Ascending aorta (tissue), 2 donors: ENCODE measurements at regions of chr6 and their contacts with region 1.

Region 1: GRCh38 chr6:63352587-63353285 is 33.0 kb upstream of the LGSN start:
- DNase-seq: no peak
- H3K4me3 ChIP-seq: no peak overlapping the region
- H3K27ac ChIP-seq: no peak overlapping the region
- H3K4me1 ChIP-seq: no peaks in the 10 kb centered on the region
- H3K27me3 ChIP-seq: no peaks in the 10 kb centered on the region
- CTCF ChIP-seq: peak in 1 of 3 experiments; percentile 28

Region 2: DNA sequence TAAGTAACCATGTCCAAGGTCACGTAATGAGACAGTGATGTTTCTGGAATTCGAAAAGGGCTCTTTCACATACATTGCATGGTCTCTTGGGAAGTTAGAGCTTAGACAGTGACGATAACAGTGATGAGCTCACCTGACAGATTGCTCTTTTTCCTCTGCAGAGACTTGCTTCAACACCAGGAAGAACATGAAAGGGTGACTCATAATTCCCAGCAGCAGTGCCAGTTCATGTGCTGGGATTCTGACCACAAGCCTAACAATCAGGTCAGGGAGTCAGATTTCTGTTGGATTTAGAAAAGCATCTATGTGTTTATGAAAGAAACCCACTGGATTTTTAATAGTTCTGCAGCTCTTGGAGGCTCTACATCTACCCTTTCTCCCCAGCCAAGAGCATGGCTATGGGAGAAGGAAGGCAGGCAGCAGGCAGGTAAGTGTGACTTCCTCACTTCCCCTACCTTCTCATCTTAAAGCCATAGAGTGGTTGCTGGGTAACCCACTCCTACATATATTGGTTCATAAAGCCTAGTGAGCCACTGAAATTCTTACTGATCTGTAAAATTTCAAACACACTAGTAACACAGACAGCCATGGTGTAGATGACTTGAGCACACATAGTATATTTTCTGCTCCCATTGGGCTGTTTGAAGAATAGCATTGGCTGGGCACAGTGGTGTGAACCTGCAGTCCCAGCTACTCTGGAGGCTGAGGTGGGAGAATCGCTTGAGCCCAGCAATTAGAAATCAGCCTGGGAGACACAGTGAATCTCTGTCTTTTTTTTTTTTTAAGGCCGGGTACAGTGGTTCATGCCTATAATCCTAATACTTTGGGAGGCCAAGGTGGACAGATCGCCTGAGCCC is 175.2 kb after region 1 on chr6:
- intact Hi-C with region 1: no loop called
- DNase-seq: no peak
- H3K4me3 ChIP-seq: no peak overlapping the region
- H3K27ac ChIP-seq: no peak overlapping the region
- H3K4me1 ChIP-seq: no peaks in the 10 kb centered on the region
- H3K27me3 ChIP-seq: no peaks in the 10 kb centered on the region
- CTCF ChIP-seq: no peak

Region 3: GRCh38 chr6:63764318-63764916 is 411.7 kb after region 1 on chr6:
- intact Hi-C with region 1: loop called (anchors 10 kb)
- DNase-seq: no peak
- H3K4me3 ChIP-seq: no peak overlapping the region
- H3K27ac ChIP-seq: no peak overlapping the region
- H3K4me1 ChIP-seq: no peaks in the 10 kb centered on the region
- H3K27me3 ChIP-seq: no peaks in the 10 kb centered on the region
- CTCF ChIP-seq: peak; percentile 44 to 57 (median 51)